PC-9 (cell line): ENCODE measurements at regions of chr5 and their contacts with region 1.

Region 1: GRCh38 chr5:30401479-30402058 is 791.9 kb upstream of the CDH6 start:
- DNase-seq: peak in 1 of 2 experiments; percentile 34
- H3K4me3 ChIP-seq: no peak overlapping the region
- H3K27ac ChIP-seq: no peak overlapping the region
- H3K4me1 ChIP-seq: no peaks in the 10 kb centered on the region
- H3K27me3 ChIP-seq: no peaks in the 10 kb centered on the region
- CTCF ChIP-seq: peak; percentile 76

Region 2: DNA sequence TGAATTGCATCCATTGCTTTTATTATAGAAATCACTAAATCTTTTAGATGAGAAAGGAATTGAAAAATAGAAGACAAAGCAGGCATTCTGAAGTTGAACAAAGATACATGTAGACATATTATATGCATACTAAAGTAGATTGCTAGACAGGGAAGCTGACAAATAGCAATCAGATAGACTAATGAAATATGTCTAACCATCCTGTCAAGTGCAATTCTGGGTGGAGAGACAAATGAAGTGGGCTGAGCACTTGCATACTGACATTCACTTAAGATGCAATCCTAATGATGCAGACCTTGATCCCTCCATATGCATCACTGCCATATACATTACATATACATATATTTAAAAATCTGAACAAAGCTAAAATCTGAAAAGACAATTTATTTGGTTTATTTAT is 338.1 kb before region 1 on chr5:
- CTCF ChIA-PET with region 1: no interaction called
- POLR2A ChIA-PET with region 1: interaction called, 10 read pairs
- intact Hi-C with region 1: no loop called
- DNase-seq: no peak
- H3K4me3 ChIP-seq: no peak overlapping the region
- H3K27ac ChIP-seq: no peak overlapping the region
- H3K4me1 ChIP-seq: no peaks in the 10 kb centered on the region
- H3K27me3 ChIP-seq: no peaks in the 10 kb centered on the region
- CTCF ChIP-seq: no peak

Region 3: GRCh38 chr5:30357371-30357770 is 44.2 kb before region 1 on chr5:
- CTCF ChIA-PET with region 1: no interaction called
- POLR2A ChIA-PET with region 1: no interaction called
- intact Hi-C with region 1: no loop called
- DNase-seq: no peak
- H3K4me3 ChIP-seq: no peak overlapping the region
- H3K27ac ChIP-seq: no peak overlapping the region
- H3K4me1 ChIP-seq: no peaks in the 10 kb centered on the region
- H3K27me3 ChIP-seq: no peaks in the 10 kb centered on the region
- CTCF ChIP-seq: no peak

Region 4: GRCh38 chr5:31186672-31187267 is 785.2 kb after region 1 on chr5:
- CTCF ChIA-PET with region 1: no interaction called
- POLR2A ChIA-PET with region 1: no interaction called
- intact Hi-C with region 1: loop called (anchors 1 kb)
- DNase-seq: no peak
- H3K4me3 ChIP-seq: no peak overlapping the region
- H3K27ac ChIP-seq: no peak overlapping the region
- H3K4me1 ChIP-seq: no peaks in the 10 kb centered on the region
- H3K27me3 ChIP-seq: no peaks in the 10 kb centered on the region
- CTCF ChIP-seq: peak; percentile 97